BJ (cell line): ENCODE measurements at regions of chr11 and their contacts with region 1.

Region 1: DNA sequence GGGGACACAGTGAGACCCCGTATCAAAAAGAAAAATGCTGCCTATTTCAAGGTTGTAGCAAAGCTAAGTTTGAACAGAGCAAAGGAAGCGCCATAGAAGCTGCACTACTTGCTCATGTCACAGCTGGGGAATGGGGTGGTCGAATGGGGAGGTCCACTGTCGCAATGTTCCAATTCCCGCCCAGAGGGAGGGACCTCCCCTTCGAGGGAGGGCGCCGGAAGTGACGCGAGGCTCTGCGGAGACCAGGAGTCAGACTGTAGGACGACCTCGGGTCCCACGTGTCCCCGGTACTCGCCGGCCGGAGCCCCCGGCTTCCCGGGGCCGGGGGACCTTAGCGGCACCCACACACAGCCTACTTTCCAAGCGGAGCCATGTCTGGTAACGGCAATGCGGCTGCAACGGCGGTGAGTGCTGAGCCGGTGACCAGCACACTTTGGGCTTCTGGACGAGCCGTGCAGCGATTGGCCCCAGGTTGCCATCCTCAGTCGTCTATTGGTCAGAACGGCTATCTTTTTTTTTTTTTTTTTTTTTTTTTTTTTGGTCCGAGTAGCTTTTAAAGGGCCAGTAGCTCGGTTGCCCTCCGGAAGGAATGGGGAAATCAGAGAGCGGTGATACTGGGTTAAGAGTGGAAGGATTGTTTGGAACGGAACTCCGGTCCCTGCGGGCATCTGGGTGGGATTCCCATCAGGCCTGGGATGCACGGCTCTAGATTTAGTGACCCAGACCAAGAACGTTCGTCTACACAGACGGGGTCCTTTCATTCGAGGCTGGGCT is at the start of gene HMBS:
- DNase-seq: peak; percentile 74
- H3K4me3 ChIP-seq: peak within 1 kb of the TSS; percentile 78
- H3K27me3 ChIP-seq: no peaks in the 10 kb centered on the region
- CTCF ChIP-seq: no peak
- polyA plus RNA-seq, gene HMBS: 38.4 and 54.9 TPM in 2 replicates

Region 2: GRCh38 chr11:119023741-119024140 is 61.1 kb before region 1 on chr11:
- CTCF ChIA-PET with region 1: no interaction called
- POLR2A ChIA-PET with region 1: interaction called, 14 read pairs
- DNase-seq: no peak
- H3K4me3 ChIP-seq: no peak overlapping the region
- H3K27me3 ChIP-seq: no peaks in the 10 kb centered on the region
- CTCF ChIP-seq: no peak

Region 3: GRCh38 chr11:119067371-119068222 is 17.3 kb before region 1 on chr11 and contains the start of gene VPS11:
- CTCF ChIA-PET with region 1: interaction called, 3 read pairs
- POLR2A ChIA-PET with region 1: interaction called, 26 read pairs
- DNase-seq: peak; percentile 79
- H3K4me3 ChIP-seq: peak within 1 kb of the TSS; percentile 83
- H3K27me3 ChIP-seq: no peaks in the 10 kb centered on the region
- CTCF ChIP-seq: no peak
- polyA plus RNA-seq, gene VPS11: 11.4 and 15.9 TPM in 2 replicates

Region 4: DNA sequence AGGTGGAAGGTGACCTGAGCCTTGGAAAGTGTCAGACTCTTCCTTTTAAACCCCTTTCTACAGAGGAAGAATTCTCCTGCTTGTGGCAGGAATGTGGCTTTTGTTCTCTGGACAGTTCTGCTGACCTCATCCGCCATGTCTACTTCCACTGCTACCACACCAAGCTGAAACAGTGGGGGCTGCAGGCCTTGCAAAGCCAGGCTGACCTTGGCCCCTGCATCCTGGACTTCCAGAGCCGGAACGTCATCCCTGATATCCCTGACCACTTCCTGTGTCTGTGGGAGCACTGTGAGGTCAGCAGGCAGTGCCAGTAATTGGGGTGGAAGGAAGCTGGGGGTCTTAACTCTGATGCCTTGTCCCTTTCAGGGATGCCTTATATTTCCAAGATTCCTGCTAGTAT is 45.8 kb after region 1 on chr11:
- CTCF ChIA-PET with region 1: no interaction called
- POLR2A ChIA-PET with region 1: no interaction called
- DNase-seq: no peak
- H3K4me3 ChIP-seq: no peak overlapping the region
- H3K27me3 ChIP-seq: no peaks in the 10 kb centered on the region
- CTCF ChIP-seq: no peak